CD8-positive, alpha-beta memory T cell (primary cell): ENCODE measurements at regions of chr1 and their contacts with region 1.

Region 1: DNA sequence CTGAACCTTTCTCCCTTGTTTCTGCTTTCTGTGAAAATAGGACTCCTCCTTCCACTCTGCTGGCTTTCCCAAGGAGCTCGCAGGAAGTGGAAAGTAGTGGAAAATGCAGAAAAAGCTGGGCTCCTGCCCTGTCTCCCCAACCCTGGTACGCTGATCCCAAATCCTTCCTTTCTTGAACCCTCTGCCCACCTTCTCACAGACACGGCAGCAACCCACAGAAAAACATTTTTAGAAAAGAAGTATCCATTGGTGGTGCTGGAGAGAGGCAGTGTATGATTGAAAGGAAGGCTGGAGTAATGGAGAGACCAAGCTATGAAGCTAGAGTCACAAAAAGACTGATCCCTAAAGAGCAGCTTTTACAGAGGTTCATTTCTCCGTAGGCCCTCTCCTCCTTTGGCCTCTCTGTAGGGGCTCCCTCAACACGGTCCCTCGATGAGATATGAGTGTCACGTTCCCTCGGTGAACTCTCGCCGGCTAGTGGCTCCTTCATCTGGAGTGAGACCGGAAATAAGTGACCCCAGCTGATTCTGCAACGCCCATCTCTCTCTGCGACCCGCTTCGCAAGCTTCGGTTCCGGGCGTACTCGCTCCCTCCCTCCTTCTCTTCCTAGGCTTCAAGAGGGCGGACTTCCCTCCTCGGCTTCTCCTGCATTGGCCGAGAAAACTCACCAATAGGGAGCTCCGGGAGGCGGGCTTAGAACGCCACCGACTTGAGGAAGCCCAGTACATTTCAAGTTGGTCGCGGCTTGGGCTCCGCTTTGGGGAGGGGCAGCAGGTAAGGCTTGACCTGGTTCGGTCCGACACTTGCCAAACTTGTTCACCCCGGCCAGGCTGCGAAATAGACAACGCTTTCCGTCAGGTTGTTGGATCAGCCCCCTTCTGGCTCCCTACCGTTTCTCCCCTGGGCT is at the starts of genes ANKRD34A and POLR3GL:
- DNase-seq: peak; percentile 84 to 95 (median 90)
- H3K4me3 ChIP-seq: peak within 1 kb of the TSS; percentile 88
- H3K4me3 Mint-ChIP-seq: peak within 1 kb of the TSS; percentile 93 to 98 (median 96)
- H3K27ac ChIP-seq: peak within 1 kb of the TSS; percentile 71
- H3K27ac Mint-ChIP-seq: peak within 1 kb of the TSS; percentile 84 to 99 (median 96)
- H3K4me1 ChIP-seq: peaks cover 46% of the 10 kb centered on the region
- H3K4me1 Mint-ChIP-seq: peaks cover 51 to 72% (median 53%) of the 10 kb centered on the region in 3 donors
- H3K27me3 ChIP-seq: no peaks in the 10 kb centered on the region
- H3K27me3 Mint-ChIP-seq: peaks cover 0 to 3% of the 10 kb centered on the region in 2 donors
- total RNA-seq, gene ANKRD34A: 6.9 to 8.7 TPM
- total RNA-seq, gene POLR3GL: 21.6 to 22.8 TPM

Region 2: GRCh38 chr1:145918144-145918992 is 45.9 kb before region 1 on chr1 and contains the start of gene PEX11B:
- CTCF ChIA-PET with region 1: interaction called, 4 read pairs
- POLR2A ChIA-PET with region 1: interaction called, 17 read pairs
- DNase-seq: peak; percentile 85 to 94 (median 89)
- H3K4me3 ChIP-seq: peak within 1 kb of the TSS; percentile 85
- H3K4me3 Mint-ChIP-seq: peak within 1 kb of the TSS; percentile 90 to 100 (median 97)
- H3K27ac ChIP-seq: peak within 1 kb of the TSS; percentile 68
- H3K27ac Mint-ChIP-seq: peak within 1 kb of the TSS; percentile 83 to 98 (median 96)
- H3K4me1 ChIP-seq: peaks cover 21% of the 10 kb centered on the region
- H3K4me1 Mint-ChIP-seq: peaks cover 52 to 66% (median 60%) of the 10 kb centered on the region in 3 donors
- H3K27me3 ChIP-seq: no peaks in the 10 kb centered on the region
- H3K27me3 Mint-ChIP-seq: no peaks in the 10 kb centered on the region
- total RNA-seq, gene PEX11B: 42.0 to 43.1 TPM

Region 3: GRCh38 chr1:145927063-145927886 is 37.0 kb before region 1 on chr1 and contains the start of gene RBM8A:
- CTCF ChIA-PET with region 1: interaction called, 24 read pairs
- POLR2A ChIA-PET with region 1: interaction called, 87 read pairs
- DNase-seq: peak; percentile 85 to 97 (median 96)
- H3K4me3 ChIP-seq: peak within 1 kb of the TSS; percentile 89
- H3K4me3 Mint-ChIP-seq: peak within 1 kb of the TSS in 3 of 7 donors; percentile 47 to 84 (median 57)
- H3K27ac ChIP-seq: peak within 1 kb of the TSS; percentile 93
- H3K27ac Mint-ChIP-seq: peak within 1 kb of the TSS in 4 of 8 donors; percentile 74 to 92 (median 82)
- H3K4me1 ChIP-seq: peaks cover 29% of the 10 kb centered on the region
- H3K4me1 Mint-ChIP-seq: peaks cover 10 to 22% (median 20%) of the 10 kb centered on the region in 3 donors
- H3K27me3 ChIP-seq: no peaks in the 10 kb centered on the region
- H3K27me3 Mint-ChIP-seq: no peaks in the 10 kb centered on the region
- total RNA-seq, gene RBM8A: 387 to 397 TPM

Region 4: DNA sequence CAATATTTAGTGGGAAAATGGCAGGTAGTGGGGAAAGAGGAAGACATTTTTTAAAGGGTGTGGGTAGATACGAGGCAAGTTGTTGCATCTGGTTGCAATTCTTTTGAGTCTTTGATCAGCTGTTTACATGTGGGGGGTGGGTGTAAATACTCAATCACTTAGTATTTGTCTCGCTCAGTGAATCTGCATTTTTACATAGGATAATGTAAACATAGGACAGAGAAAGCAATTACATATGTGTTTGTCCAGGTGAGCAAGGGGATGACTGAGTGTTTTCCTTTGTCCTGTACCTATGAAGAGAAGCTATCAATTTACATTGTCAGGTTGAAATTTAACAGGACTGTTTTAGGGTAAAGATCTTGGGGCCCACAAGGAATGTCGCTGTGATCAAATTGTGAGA is 1129.2 kb after region 1 on chr1:
- CTCF ChIA-PET with region 1: no interaction called
- POLR2A ChIA-PET with region 1: interaction called, 11 read pairs
- DNase-seq: no peak
- H3K4me3 ChIP-seq: no peak overlapping the region
- H3K4me3 Mint-ChIP-seq: no peak overlapping the region
- H3K27ac ChIP-seq: no peak overlapping the region
- H3K27ac Mint-ChIP-seq: no peak overlapping the region
- H3K4me1 ChIP-seq: no peaks in the 10 kb centered on the region
- H3K4me1 Mint-ChIP-seq: no peaks in the 10 kb centered on the region
- H3K27me3 ChIP-seq: no peaks in the 10 kb centered on the region
- H3K27me3 Mint-ChIP-seq: peaks cover 11 to 28% of the 10 kb centered on the region in 2 donors